Right ventricle myocardium inferior (tissue), 1 donor: ENCODE measurements at regions of chr19 and their contacts with region 1.

Region 1: DNA sequence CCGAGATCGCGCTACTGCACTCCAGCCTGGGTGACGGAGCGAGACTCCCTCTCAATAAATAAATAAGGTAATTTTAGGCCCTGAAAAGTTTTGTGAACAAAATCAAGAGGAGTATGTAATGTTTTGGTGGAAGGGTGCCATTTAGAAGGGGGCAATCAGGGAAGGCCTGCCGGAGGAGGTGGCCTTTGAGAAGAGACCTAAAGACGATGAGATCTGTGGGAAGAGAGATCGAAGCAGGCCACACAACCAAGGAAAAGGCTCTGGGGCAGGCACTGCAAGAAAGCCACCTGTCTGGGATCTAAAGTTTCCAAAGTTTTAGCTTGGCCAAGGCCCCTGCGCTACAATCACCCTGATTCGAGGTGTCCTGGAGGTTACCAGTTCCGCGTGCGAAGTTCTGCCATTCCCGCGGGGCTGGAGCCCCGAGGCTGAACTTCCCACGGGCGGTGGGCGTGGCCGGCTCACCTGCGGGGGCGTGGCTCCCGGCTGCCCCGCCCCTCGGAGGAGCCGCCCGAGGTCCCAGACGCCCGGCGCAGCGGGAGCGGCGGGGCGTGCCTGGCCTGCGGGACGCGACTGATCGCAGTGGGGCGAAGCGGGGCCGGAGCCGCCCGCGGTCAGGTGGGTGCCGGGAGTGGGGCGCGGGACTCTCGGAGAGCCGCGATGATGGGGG is at the start of gene KLC3:
- DNase-seq: no peak
- ATAC-seq: no peak
- total RNA-seq, gene KLC3: not detected

Region 2: GRCh38 chr19:45200568-45200994 is 139.8 kb before region 1 on chr19:
- intact Hi-C with region 1: loop called (anchors 10 kb)
- DNase-seq: no peak
- ATAC-seq: no peak

Region 3: DNA sequence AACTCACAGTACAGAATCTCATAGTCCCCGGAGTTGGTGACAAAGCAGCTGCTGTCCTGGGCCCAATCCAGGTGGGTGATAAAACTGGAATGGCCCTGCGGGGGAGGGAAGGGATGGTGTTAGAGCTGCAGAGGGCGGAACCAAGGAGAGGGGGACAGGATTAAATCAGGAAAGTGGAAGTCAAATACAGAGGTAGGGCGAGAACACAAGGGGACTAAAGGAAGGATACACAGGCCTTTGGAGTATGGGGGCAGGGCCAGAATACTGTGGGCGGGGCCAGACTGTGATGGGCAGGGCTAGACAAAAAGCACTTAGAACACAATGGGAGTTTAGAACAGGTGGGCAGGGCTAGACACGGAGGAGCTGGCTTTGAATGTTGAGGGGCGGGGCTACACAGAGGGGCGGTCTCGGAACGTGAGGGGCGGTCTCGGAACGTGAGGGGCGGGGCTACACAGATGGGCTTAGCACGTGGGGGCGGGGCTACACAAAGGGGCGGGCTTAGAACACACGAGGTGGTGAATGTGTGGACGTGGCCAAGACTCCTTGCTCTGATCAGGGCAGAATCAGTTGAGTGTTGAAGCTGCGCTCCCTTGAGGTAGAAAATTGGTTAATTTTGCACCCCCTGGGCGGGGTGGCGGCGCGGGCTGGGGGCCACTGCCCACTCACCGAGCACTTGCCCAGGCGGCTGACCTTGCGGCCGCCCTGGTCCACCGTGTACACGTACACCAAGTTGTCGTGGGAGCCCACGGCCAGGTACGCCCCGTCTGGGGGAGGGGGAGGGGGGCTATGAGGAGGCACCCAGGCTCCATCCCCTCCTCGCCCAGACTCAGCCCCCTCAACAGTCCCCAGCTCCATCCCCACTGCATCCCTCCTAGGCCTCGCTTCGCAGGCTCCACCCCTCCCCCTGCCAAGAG is 275.7 kb after region 1 on chr19:
- intact Hi-C with region 1: no loop called
- DNase-seq: peak; percentile 82
- ATAC-seq: peak; percentile 79